Right cardiac atrium (tissue), 5 donors: ENCODE measurements at regions of chr12 and their contacts with region 1.

Region 1: DNA sequence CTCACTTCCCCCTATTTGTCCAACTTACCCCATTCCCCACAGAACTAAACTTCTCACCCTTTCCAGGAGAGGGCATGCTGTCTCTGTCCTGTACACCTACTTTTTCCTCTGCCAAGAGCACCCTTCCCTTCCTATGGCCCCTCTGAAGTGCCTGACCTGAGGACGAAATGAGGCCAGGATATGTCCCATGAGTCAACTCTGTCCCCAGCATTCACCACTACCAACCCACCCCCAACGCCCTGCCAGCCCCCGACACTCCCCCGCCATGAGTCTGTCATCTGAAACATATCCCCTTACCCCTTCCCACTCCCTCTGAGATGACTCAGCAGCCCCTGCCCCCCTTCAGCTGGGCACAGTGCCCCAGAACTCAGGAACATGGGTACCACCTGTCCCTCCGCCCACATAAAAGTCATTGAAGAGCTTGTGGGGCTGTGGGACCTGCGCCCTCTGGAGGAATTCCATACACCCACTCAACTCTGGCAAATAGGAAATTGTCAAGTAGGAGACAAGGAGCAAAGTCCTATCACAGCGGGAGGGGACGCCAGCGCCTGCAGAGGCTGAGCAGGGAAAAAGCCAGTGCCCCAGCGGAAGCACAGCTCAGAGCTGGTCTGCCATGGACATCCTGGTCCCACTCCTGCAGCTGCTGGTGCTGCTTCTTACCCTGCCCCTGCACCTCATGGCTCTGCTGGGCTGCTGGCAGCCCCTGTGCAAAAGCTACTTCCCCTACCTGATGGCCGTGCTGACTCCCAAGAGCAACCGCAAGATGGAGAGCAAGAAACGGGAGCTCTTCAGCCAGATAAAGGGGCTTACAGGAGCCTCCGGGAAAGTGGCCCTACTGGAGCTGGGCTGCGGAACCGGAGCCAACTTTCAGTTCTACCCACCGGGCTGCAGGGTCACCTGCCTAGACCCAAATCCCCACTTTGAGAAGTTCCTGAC is 26.3 kb downstream of the ITGA7 start:
- DNase-seq: peak; percentile 62 to 89 (median 81)
- ATAC-seq: peak; percentile 73 to 75
- H3K4me3 ChIP-seq: peak overlapping the region; percentile 66
- H3K27ac ChIP-seq: peak overlapping the region; percentile 82
- H3K4me1 ChIP-seq: peaks cover 2% of the 10 kb centered on the region
- H3K27me3 ChIP-seq: no peaks in the 10 kb centered on the region

Region 2: GRCh38 chr12:55642669-55643068 is 38.7 kb before region 1 on chr12:
- intact Hi-C with region 1: no loop called
- DNase-seq: no peak
- ATAC-seq: no peak
- H3K4me3 ChIP-seq: no peak overlapping the region
- H3K27ac ChIP-seq: no peak overlapping the region
- H3K4me1 ChIP-seq: peaks cover 4% of the 10 kb centered on the region
- H3K27me3 ChIP-seq: no peaks in the 10 kb centered on the region

Region 3: GRCh38 chr12:55715833-55716581 is 34.6 kb after region 1 on chr12 and contains the start of gene BLOC1S1:
- intact Hi-C with region 1: loop called in 2 of 4 experiments (anchors 5 kb)
- DNase-seq: peak; percentile 93 to 97 (median 96)
- ATAC-seq: peak; percentile 63 to 77
- H3K4me3 ChIP-seq: peak within 1 kb of the TSS; percentile 51
- H3K27ac ChIP-seq: peak within 1 kb of the TSS; percentile 87
- H3K4me1 ChIP-seq: peaks cover 29% of the 10 kb centered on the region
- H3K27me3 ChIP-seq: no peaks in the 10 kb centered on the region
- total RNA-seq, gene BLOC1S1: 134 to 149 (median 139) TPM

Region 4: GRCh38 chr12:55724226-55724939 is 43.0 kb after region 1 on chr12:
- intact Hi-C with region 1: loop called in 2 of 4 experiments (anchors 5 kb)
- DNase-seq: peak; percentile 70 to 90 (median 83)
- ATAC-seq: no peak
- H3K4me3 ChIP-seq: no peak overlapping the region
- H3K27ac ChIP-seq: peak overlapping the region; percentile 33
- H3K4me1 ChIP-seq: peaks cover 14% of the 10 kb centered on the region
- H3K27me3 ChIP-seq: no peaks in the 10 kb centered on the region